ENCODE measurements at regions of chr11 and their contacts with region 1.

Region 1: GRCh38 chr11:18634140-18635032 is at the start of gene SPTY2D1:
- DNase-seq: peak; percentile 90 to 100 (median 96)
- ATAC-seq: peak; percentile 92
- H3K4me3 ChIP-seq: peak within 1 kb of the TSS; percentile 75
- H3K4me3 Mint-ChIP-seq: peak within 1 kb of the TSS; percentile 96
- H3K27ac ChIP-seq: peak within 1 kb of the TSS; percentile 88 to 98
- H3K27ac Mint-ChIP-seq: peak within 1 kb of the TSS; percentile 97
- H3K4me1 ChIP-seq: peaks cover 25% of the 10 kb centered on the region
- H3K4me1 Mint-ChIP-seq: peaks cover 36% of the 10 kb centered on the region
- H3K27me3 ChIP-seq: no peaks in the 10 kb centered on the region
- H3K27me3 Mint-ChIP-seq: no peaks in the 10 kb centered on the region
- CTCF ChIP-seq: no peak
- total RNA-seq, gene SPTY2D1: 58.7 to 66.0 TPM

Region 2: DNA sequence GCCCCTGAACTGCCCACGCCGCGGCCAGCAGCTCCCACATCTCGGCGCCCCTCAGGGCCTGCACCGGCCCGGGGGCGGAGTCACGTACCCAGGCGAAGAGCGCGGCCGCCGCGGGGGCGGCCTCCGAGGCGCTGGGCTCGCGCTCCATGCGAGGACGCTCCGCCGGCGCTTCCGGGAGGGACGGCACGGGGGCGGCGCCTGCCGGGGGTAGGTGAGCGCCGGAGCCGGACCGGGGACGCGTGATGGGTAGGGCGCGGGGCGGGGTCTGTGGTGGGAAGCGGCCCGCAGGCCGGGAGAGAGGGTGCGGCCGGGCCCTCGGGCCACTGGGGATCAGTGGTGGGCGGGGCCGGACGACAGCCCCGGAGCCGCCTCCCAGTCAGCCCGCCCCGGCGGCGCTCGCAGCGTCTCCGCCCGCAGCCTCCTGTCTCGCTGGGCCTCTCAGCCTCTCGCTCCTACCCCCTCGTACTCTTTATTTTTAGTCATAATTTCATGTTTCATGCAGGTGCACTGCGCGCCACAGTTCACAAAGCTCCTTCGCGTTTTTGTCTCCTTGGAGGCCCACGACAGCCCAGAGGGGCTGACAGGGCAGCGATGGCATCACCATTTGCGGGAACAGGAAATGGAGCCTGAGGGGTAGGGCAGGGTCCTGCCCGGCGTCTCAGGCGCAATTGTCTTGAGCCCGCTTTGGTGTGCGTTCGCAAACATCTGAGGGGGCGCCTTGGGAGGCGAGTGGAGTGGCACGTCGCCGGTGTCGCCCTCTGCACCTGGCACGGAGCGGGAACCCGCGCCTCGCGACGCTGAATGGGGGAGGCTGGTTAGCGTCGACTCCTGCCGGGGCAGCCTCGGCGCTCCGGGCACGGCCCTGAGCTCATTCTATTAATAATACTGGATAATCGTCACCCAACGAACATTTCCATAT is 621.3 kb before region 1 on chr11 and contains the start of gene SERGEF:
- CTCF ChIA-PET with region 1: no interaction called
- POLR2A ChIA-PET with region 1: interaction called, 6 read pairs
- intact Hi-C with region 1: loop called in 1 of 2 experiments (anchors 5 kb)
- DNase-seq: peak; percentile 79 to 97 (median 93)
- ATAC-seq: peak; percentile 80
- H3K4me3 ChIP-seq: peak within 1 kb of the TSS; percentile 98
- H3K4me3 Mint-ChIP-seq: peak within 1 kb of the TSS; percentile 98
- H3K27ac ChIP-seq: peak within 1 kb of the TSS; percentile 82 to 83
- H3K27ac Mint-ChIP-seq: peak within 1 kb of the TSS; percentile 92
- H3K4me1 ChIP-seq: peaks cover 22% of the 10 kb centered on the region
- H3K4me1 Mint-ChIP-seq: peaks cover 33% of the 10 kb centered on the region
- H3K27me3 ChIP-seq: no peaks in the 10 kb centered on the region
- H3K27me3 Mint-ChIP-seq: no peaks in the 10 kb centered on the region
- CTCF ChIP-seq: no peak
- total RNA-seq, gene SERGEF: 35.2 to 37.1 TPM

Region 3: GRCh38 chr11:18115360-18116127 is 518.8 kb before region 1 on chr11:
- CTCF ChIA-PET with region 1: no interaction called
- POLR2A ChIA-PET with region 1: no interaction called
- intact Hi-C with region 1: no loop called
- DNase-seq: peak; percentile 41 to 81 (median 50)
- ATAC-seq: peak; percentile 89
- H3K4me3 ChIP-seq: no peak overlapping the region
- H3K4me3 Mint-ChIP-seq: no peak overlapping the region
- H3K27ac ChIP-seq: no peak overlapping the region
- H3K27ac Mint-ChIP-seq: no peak overlapping the region
- H3K4me1 ChIP-seq: peaks cover 6% of the 10 kb centered on the region
- H3K4me1 Mint-ChIP-seq: no peaks in the 10 kb centered on the region
- H3K27me3 ChIP-seq: peaks cover 3 to 7% of the 10 kb centered on the region in 2 experiments
- H3K27me3 Mint-ChIP-seq: peaks cover 27% of the 10 kb centered on the region
- CTCF ChIP-seq: peak; percentile 86

Region 4: GRCh38 chr11:18395735-18396504 is 238.5 kb before region 1 on chr11:
- CTCF ChIA-PET with region 1: no interaction called
- POLR2A ChIA-PET with region 1: interaction called, 6 read pairs
- intact Hi-C with region 1: loop called (anchors 5 kb)
- DNase-seq: peak; percentile 84 to 98 (median 92)
- ATAC-seq: peak; percentile 62
- H3K4me3 ChIP-seq: peak overlapping the region; percentile 100
- H3K4me3 Mint-ChIP-seq: peak overlapping the region; percentile 99
- H3K27ac ChIP-seq: peak overlapping the region; percentile 89 to 90
- H3K27ac Mint-ChIP-seq: peak overlapping the region; percentile 99
- H3K4me1 ChIP-seq: peaks cover 50% of the 10 kb centered on the region
- H3K4me1 Mint-ChIP-seq: peaks cover 59% of the 10 kb centered on the region
- H3K27me3 ChIP-seq: no peaks in the 10 kb centered on the region
- H3K27me3 Mint-ChIP-seq: no peaks in the 10 kb centered on the region
- CTCF ChIP-seq: no peak

Region 5: GRCh38 chr11:18485913-18486528 is 148.4 kb before region 1 on chr11:
- CTCF ChIA-PET with region 1: no interaction called
- POLR2A ChIA-PET with region 1: no interaction called
- intact Hi-C with region 1: no loop called
- DNase-seq: peak in 1 of 14 experiments; percentile 18
- ATAC-seq: no peak
- H3K4me3 ChIP-seq: no peak overlapping the region
- H3K4me3 Mint-ChIP-seq: no peak overlapping the region
- H3K27ac ChIP-seq: no peak overlapping the region
- H3K27ac Mint-ChIP-seq: no peak overlapping the region
- H3K4me1 ChIP-seq: no peaks in the 10 kb centered on the region
- H3K4me1 Mint-ChIP-seq: peaks cover 6% of the 10 kb centered on the region
- H3K27me3 ChIP-seq: no peaks in the 10 kb centered on the region
- H3K27me3 Mint-ChIP-seq: no peaks in the 10 kb centered on the region
- CTCF ChIP-seq: no peak

Region 6: DNA sequence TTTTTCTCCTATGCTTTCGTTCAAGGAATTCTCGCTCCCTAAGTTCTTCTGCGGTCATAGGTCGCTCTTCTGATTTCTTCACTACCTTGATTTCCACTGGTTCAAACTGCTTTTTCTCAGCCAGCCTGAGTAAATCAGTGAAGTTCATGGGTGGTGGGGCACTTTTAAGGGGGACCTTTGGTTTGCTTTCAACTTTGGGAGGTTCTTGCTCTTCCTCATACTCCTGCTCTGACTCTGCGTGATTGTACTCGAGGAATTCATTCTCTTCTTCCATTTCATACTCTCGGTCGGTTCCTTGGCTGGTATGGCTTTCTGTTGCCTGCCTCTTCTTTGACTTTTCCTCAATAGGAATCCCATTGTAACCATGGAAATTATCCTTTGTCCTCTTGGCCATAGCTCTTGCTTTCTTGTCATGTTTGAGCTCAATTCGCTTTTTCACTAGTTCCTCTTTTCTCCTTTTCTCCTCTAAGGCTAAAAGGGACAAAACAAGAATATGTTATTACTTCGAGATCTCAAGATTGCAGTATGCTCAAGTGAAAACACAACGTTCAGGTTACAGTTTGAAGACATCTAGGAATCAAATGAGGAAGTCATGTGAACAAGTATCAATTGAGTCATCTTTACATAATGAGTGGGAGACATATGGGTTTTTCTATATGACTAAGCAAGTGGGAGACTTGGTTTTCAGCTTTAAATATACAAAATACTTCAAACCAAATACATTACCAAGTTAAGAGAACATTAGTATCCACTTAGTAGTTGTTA is 18.6 kb before region 1 on chr11:
- CTCF ChIA-PET with region 1: no interaction called
- POLR2A ChIA-PET with region 1: interaction called, 39 read pairs
- intact Hi-C with region 1: loop called in 1 of 2 experiments (anchors 1 kb)
- DNase-seq: peak in 3 of 14 experiments; percentile 17 to 41 (median 36)
- ATAC-seq: no peak
- H3K4me3 ChIP-seq: no peak overlapping the region
- H3K4me3 Mint-ChIP-seq: no peak overlapping the region
- H3K27ac ChIP-seq: no peak overlapping the region
- H3K27ac Mint-ChIP-seq: no peak overlapping the region
- H3K4me1 ChIP-seq: peaks cover 31% of the 10 kb centered on the region
- H3K4me1 Mint-ChIP-seq: peaks cover 52% of the 10 kb centered on the region
- H3K27me3 ChIP-seq: no peaks in the 10 kb centered on the region
- H3K27me3 Mint-ChIP-seq: no peaks in the 10 kb centered on the region
- CTCF ChIP-seq: no peak

Region 7: DNA sequence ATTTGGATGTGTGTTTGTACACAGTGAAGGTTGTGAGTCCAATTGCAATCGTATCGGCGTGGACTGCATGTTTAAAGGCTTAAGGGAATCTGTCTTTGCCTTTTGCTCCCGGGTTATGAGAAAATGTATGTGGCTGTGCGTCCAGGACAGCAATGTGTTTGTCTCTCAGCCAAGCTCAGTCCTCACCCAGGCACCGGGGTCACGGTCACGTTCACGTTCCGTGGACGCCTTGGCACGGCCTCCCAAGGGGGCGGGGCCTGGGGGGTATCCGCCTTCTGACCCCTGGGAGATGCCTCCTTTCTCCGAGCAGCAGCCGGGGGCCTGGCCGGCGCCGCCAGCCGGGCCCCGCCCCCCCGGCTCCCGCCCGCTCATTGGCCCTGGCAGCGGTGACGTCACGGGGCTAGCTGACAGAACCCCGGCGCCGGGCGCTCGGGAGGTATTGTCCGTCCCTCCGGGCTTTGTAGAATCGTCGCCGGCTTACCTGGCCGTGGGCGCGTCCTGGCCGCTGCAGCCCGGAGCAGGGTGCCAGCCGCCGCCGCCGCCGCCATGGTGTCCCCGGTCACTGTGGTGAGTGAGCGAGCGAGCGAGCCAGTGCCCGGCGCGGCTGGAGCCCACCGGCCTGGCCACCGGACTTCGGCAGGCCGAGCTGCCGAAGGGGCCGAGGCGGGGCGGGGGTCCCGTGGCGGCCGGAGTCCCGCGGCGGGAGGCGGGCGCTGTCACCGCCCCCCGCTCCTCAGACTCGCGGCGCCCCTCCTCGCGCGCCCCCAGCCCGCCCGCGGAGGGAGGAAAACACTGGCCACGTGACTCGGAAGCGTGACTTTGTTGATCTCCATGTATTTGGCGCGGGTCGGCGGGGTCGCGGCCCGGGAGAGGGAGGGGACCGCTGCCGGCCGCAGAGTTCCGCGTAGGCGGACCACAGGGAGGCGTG is 64.2 kb after region 1 on chr11 and contains the start of gene TMEM86A:
- CTCF ChIA-PET with region 1: no interaction called
- POLR2A ChIA-PET with region 1: interaction called, 18 read pairs
- intact Hi-C with region 1: loop called (anchors 2 kb)
- DNase-seq: peak; percentile 78 to 96 (median 88)
- ATAC-seq: peak; percentile 92
- H3K4me3 ChIP-seq: peak within 1 kb of the TSS; percentile 60
- H3K4me3 Mint-ChIP-seq: peak within 1 kb of the TSS; percentile 89
- H3K27ac ChIP-seq: peak within 1 kb of the TSS; percentile 47 to 54
- H3K27ac Mint-ChIP-seq: peak within 1 kb of the TSS; percentile 70
- H3K4me1 ChIP-seq: peaks cover 26% of the 10 kb centered on the region
- H3K4me1 Mint-ChIP-seq: peaks cover 14% of the 10 kb centered on the region
- H3K27me3 ChIP-seq: no peaks in the 10 kb centered on the region
- H3K27me3 Mint-ChIP-seq: no peaks in the 10 kb centered on the region
- CTCF ChIP-seq: no peak
- total RNA-seq, gene TMEM86A: 8.0 to 8.5 TPM

Region 8: DNA sequence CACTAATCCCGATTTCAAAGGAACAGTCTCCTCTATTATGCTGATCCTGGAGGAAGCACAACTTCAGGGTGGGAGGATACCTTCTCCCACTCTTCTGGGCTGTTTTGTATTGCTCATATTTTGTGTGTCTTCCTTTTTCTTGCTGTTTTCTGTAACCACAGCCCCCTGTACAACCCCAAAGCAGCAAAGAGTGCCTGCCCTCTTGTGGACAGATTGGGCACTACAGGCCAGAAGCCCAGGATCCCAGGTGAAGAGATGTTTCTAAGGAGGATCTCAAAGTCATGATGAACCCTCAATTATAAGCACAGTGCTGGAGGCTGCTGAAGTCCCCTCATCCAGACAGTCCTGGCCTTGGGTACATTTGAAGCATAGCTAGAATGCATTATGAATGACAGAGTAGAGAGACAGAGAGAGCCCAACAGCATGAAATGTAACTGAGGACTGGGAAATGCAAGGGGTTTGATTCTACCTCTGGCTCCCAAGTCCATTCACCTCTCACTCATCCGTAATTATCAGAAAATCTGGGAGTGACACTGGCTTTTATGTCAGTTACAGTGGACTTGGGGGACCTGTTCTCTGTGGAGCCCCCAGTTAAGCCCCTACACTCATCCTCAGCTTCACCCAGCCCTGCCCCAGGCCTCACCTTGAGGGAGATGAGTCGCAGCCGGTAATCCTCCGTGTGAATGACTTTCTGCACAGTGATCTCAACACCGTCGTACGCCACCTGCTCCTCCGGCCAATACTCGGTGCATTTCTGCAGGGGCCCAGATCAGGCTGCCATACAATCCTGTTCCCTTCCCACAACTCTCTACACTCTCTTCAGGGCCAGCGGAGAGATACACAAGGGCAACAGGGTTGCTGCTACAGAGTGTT is 97.8 kb after region 1 on chr11:
- CTCF ChIA-PET with region 1: interaction called, 4 read pairs
- POLR2A ChIA-PET with region 1: interaction called, 8 read pairs
- intact Hi-C with region 1: loop called in 1 of 2 experiments (anchors 5 kb)
- DNase-seq: peak; percentile 40 to 82 (median 67)
- ATAC-seq: peak; percentile 80
- H3K4me3 ChIP-seq: no peak overlapping the region
- H3K4me3 Mint-ChIP-seq: no peak overlapping the region
- H3K27ac ChIP-seq: no peak overlapping the region
- H3K27ac Mint-ChIP-seq: no peak overlapping the region
- H3K4me1 ChIP-seq: peaks cover 17% of the 10 kb centered on the region
- H3K4me1 Mint-ChIP-seq: peaks cover 10% of the 10 kb centered on the region
- H3K27me3 ChIP-seq: no peaks in the 10 kb centered on the region
- H3K27me3 Mint-ChIP-seq: no peaks in the 10 kb centered on the region
- CTCF ChIP-seq: peak; percentile 97

Region 9: GRCh38 chr11:18802381-18803257 is 168.2 kb after region 1 on chr11:
- CTCF ChIA-PET with region 1: no interaction called
- POLR2A ChIA-PET with region 1: no interaction called
- intact Hi-C with region 1: no loop called
- DNase-seq: peak in 10 of 14 experiments; percentile 5 to 71 (median 22)
- ATAC-seq: peak; percentile 41
- H3K4me3 ChIP-seq: no peak overlapping the region
- H3K4me3 Mint-ChIP-seq: no peak overlapping the region
- H3K27ac ChIP-seq: no peak overlapping the region
- H3K27ac Mint-ChIP-seq: no peak overlapping the region
- H3K4me1 ChIP-seq: no peaks in the 10 kb centered on the region
- H3K4me1 Mint-ChIP-seq: no peaks in the 10 kb centered on the region
- H3K27me3 ChIP-seq: no peaks in the 10 kb centered on the region
- H3K27me3 Mint-ChIP-seq: peaks cover 21% of the 10 kb centered on the region
- CTCF ChIP-seq: peak; percentile 60